SK-N-SH (cell line): ENCODE measurements at regions of chr11 and their contacts with region 1.

Region 1: GRCh38 chr11:111992206-111992855 is 32.9 kb upstream of the DLAT start:
- DNase-seq: no peak
- H3K4me3 ChIP-seq: no peak overlapping the region
- H3K27ac ChIP-seq: peak overlapping the region in 1 of 2 experiments; percentile 7; a peak in 1 of 4 replicates
- H3K4me1 ChIP-seq: peaks cover 7 to 10% of the 10 kb centered on the region in 2 experiments; a peak in 3 of 4 replicates
- H3K27me3 ChIP-seq: no peaks in the 10 kb centered on the region
- CTCF ChIP-seq: no peak
- EP300 ChIP-seq: no peak
- RAD21 ChIP-seq: no peak

Region 2: DNA sequence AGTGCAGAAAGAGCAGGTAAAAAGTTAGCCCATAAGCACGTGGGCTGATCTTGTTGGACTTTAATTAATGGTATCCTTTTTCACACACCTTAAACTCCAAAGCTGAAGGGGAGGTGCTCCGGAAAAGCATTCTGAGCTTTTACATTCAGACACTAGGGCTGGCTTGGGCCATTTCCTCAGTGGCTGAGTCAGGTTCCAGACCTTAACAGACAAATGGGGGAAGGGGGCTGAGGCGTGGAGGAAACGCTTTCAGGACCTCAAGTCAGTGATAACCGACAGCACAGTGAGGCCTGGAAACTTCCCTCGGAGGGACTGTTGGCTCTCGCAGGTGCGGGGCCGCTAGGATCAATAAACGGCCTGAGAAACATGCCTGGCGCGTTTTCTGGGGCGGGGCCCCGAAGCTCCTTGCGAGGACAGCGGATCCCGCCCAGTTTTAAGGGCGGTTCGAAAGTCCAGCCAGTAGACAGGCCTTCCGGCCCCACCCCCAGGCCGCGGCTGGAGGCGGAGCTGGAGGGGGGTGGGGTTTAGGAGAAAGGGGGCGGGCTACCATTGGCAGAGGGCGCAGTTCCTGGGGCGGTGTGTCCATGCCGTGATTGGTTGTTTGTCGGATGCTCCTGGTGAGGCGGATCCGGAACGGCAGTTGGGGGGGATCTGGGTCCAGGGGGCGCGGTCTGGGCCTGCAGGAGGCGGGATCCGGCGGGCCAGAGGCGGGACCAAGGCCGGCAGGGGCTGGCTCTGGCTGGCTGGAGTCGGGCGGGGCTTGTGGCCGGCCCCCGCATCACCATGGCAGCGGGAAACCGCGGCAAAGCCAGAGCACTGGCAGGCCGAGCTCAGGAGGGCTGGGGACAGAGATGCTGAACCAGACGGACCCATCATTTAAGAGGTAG is 65.6 kb before region 1 on chr11:
- CTCF ChIA-PET with region 1: interaction called, 272 read pairs
- POLR2A ChIA-PET with region 1: no interaction called
- DNase-seq: peak; percentile 97
- H3K4me3 ChIP-seq: peak overlapping the region; percentile 49 to 59
- H3K27ac ChIP-seq: peak overlapping the region; percentile 76 to 84
- H3K4me1 ChIP-seq: peaks cover 7 to 30% of the 10 kb centered on the region in 2 experiments
- H3K27me3 ChIP-seq: no peaks in the 10 kb centered on the region
- CTCF ChIP-seq: 0 out of 2 replicates have a peak, but pooled peaks have one; percentile 9
- EP300 ChIP-seq: no peak
- RAD21 ChIP-seq: no peak

Region 3: GRCh38 chr11:111935317-111936039 is 56.9 kb before region 1 on chr11:
- CTCF ChIA-PET with region 1: interaction called, 272 read pairs
- POLR2A ChIA-PET with region 1: no interaction called
- DNase-seq: no peak
- H3K4me3 ChIP-seq: no peak overlapping the region
- H3K27ac ChIP-seq: peak overlapping the region; percentile 60 to 92
- H3K4me1 ChIP-seq: peaks cover 44 to 52% of the 10 kb centered on the region in 2 experiments
- H3K27me3 ChIP-seq: no peaks in the 10 kb centered on the region
- CTCF ChIP-seq: no peak
- EP300 ChIP-seq: no peak
- RAD21 ChIP-seq: no peak

Region 4: DNA sequence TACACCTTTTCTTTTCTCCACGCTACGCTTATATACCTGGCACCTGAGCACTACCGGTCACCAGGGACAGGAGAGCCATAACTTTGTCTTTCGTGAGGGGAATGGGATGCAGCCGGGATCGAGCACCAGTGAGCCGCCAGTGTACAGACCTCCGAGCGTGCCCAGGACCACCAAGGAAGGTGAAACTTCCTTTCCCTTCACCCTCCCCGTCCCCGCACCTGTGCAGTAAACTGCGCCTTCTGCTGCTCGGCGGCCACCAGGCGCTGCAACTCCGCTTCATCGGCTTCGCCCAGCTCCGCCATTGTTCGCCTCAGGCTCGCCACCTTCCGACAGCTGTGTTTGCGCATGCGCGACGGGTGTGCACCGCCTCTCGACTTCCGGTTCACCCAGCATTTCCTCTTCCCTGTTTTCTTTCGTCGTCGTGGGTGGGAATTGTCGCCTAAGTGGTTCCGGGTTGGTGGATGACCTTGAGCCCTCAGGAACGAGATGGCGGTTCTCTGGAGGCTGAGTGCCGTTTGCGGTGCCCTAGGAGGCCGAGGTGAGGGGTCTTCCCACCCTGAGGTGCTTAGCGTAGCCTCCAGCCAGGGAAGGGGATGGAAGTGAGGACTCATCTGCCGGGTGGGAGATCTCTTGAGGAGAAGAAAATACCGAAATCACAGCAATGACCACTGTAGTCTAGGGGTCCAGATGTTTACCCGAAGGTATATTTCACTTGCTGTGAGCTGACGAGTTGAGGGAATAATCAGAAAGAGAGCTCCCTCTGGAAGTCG is 94.3 kb after region 1 on chr11 and contains the starts of genes SDHD and TIMM8B:
- CTCF ChIA-PET with region 1: no interaction called
- POLR2A ChIA-PET with region 1: no interaction called
- DNase-seq: peak; percentile 91
- H3K4me3 ChIP-seq: peak within 1 kb of the TSS; percentile 72 to 85
- H3K27ac ChIP-seq: peak within 1 kb of the TSS; percentile 48 to 86
- H3K4me1 ChIP-seq: peaks cover 0 to 19% of the 10 kb centered on the region in 2 experiments; a peak in 3 of 4 replicates
- H3K27me3 ChIP-seq: no peaks in the 10 kb centered on the region
- CTCF ChIP-seq: peak; percentile 40
- EP300 ChIP-seq: no peak
- RAD21 ChIP-seq: no peak
- polyA plus RNA-seq, gene SDHD: 169 and 192 TPM in 2 replicates
- polyA plus RNA-seq, gene TIMM8B: 156 and 188 TPM in 2 replicates